A673 (cell line): ENCODE measurements at regions of chr5 and their contacts with region 1.

Region 1: DNA sequence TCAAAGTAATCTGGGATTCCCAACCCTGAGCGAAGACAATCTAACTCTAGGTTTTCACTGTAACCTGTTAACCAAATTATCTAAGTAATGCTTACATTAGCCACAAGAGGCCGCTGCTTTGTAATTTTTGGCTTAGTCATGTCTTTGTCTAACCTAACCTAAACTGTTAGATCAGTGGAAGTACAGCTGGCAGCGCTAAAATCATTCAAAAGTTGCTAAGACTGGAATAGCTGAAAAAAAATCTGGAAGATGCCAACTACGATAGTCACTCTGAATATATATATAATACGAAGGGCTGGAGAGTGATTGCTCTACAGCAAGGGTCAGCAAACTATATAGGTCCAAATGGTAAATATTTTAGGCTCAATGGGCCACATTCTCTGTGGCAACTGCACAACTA is 60.2 kb downstream of the FBXO38 start:
- DNase-seq: peak; percentile 76
- H3K4me3 ChIP-seq: no peak overlapping the region
- H3K27ac ChIP-seq: no peak overlapping the region
- H3K4me1 ChIP-seq: no peaks in the 10 kb centered on the region
- H3K27me3 ChIP-seq: no peaks in the 10 kb centered on the region
- CTCF ChIP-seq: peak; percentile 79

Region 2: DNA sequence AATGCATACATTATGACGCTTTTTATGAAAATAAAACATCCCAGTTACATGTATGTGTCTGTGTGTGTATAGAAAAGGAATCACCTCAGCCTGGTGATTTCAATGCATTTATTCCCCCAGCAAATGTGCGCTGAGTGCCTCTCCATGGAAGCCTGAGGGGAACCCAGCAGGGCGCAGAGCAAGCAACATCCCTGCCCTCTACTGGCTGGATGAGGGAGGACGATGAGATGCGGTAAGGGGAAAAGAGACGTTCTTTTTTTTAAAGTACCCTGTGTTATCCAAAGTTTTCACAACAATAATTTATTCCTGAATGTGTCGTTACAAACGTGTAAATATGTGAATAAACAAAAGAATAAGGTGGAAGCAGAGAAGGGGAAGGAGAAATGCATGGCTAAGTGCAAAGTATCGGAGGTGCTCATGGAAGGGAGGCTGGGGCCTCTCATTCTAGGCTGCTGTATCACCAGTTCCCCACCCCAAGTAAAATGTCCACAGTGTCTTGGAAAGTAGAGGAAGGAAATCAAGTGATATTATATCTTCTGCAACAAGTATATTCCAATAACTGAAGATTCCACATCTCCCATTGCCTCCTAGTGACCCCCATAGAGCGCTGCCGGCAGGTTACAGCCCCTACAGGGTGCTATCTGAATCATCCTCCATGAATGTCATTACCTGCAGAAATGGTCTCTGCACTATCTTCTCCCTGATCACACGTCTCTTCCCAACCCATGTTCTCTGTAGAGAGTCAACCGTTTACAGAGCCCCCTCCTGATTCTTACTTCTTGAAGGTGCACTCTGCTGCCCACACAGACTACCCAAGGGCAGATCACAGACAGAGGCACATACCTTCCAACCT is 684.3 kb after region 1 on chr5:
- CTCF ChIA-PET with region 1: no interaction called
- POLR2A ChIA-PET with region 1: no interaction called
- intact Hi-C with region 1: loop called (anchors 10 kb)
- DNase-seq: peak; percentile 63
- H3K4me3 ChIP-seq: no peak overlapping the region
- H3K27ac ChIP-seq: no peak overlapping the region
- H3K4me1 ChIP-seq: no peaks in the 10 kb centered on the region
- H3K27me3 ChIP-seq: peaks cover 43% of the 10 kb centered on the region
- CTCF ChIP-seq: peak; percentile 85